IMR-90 (cell line): ENCODE measurements at regions of chr15 and their contacts with region 1.

Region 1: DNA sequence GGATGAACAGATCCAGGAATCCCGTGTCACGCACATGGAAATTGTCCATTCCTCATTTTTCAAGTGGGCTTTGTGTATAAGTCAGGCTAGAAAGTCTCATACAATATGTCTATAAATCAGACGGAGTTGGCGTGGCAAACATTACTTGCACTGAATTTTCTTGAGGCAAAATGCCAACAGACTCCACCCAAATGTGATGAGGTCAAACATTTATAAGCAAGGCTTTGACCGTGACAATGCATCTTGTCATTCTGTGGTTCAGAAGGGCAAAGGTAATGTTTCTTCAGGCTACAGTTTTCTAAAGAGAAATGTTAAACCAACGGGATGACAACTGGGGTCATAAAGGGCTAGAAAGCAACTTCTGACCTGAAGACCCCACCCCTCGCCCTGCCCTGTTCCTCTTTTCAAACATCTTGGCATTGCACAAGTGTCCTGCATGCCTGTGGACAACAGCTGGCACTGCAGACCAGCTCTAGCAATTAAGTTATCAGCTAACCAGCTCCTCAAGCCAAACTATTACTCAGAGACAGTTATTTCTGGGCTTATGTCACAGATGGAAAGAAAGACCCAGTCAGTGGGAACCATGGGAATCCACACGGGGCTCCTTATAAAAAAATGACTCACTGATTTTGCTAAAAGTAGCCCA is 36.5 kb upstream of the SPTBN5 start:
- DNase-seq: peak; percentile 97
- ATAC-seq: peak; percentile 72
- H3K4me3 ChIP-seq: no peak overlapping the region
- H3K27ac ChIP-seq: peak overlapping the region; percentile 10
- H3K4me1 ChIP-seq: peaks cover 36% of the 10 kb centered on the region
- H3K27me3 ChIP-seq: no peaks in the 10 kb centered on the region
- CTCF ChIP-seq: peak; percentile 59
- POLR2A ChIP-seq: no peak
- RAD21 ChIP-seq: peak; percentile 64

Region 2: GRCh38 chr15:41957021-41957897 is 26.9 kb after region 1 on chr15:
- CTCF ChIA-PET with region 1: no interaction called
- POLR2A ChIA-PET with region 1: interaction called, 19 read pairs
- dilution Hi-C with region 1: no loop called
- in situ Hi-C with region 1: no loop called
- intact Hi-C with region 1: no loop called
- DNase-seq: peak; percentile 38
- ATAC-seq: peak; percentile 49
- H3K4me3 ChIP-seq: no peak overlapping the region
- H3K27ac ChIP-seq: no peak overlapping the region
- H3K4me1 ChIP-seq: peaks cover 14% of the 10 kb centered on the region
- H3K27me3 ChIP-seq: no peaks in the 10 kb centered on the region
- CTCF ChIP-seq: no peak
- POLR2A ChIP-seq: no peak
- RAD21 ChIP-seq: no peak

Region 3: GRCh38 chr15:41972253-41973242 is 42.2 kb after region 1 on chr15 and contains the start of gene EHD4:
- CTCF ChIA-PET with region 1: no interaction called
- POLR2A ChIA-PET with region 1: no interaction called
- dilution Hi-C with region 1: no loop called
- in situ Hi-C with region 1: no loop called
- intact Hi-C with region 1: loop called (anchors 1 kb)
- DNase-seq: peak; percentile 99
- ATAC-seq: peak; percentile 96
- H3K4me3 ChIP-seq: peak within 1 kb of the TSS; percentile 96
- H3K27ac ChIP-seq: peak within 1 kb of the TSS; percentile 65
- H3K4me1 ChIP-seq: peaks cover 6% of the 10 kb centered on the region
- H3K27me3 ChIP-seq: peaks cover 2% of the 10 kb centered on the region; the same call in 1 of the 2 replicates
- CTCF ChIP-seq: peak; percentile 39; the same call in 1 of the 2 replicates
- POLR2A ChIP-seq: peak; percentile 89
- RAD21 ChIP-seq: no peak; the same call in 1 of the 2 replicates
- total RNA-seq, gene EHD4: 26.4 and 29.0 TPM in 2 replicates

Region 4: GRCh38 chr15:42056934-42057779 is 126.8 kb after region 1 on chr15:
- CTCF ChIA-PET with region 1: no interaction called
- POLR2A ChIA-PET with region 1: no interaction called
- dilution Hi-C with region 1: no loop called
- in situ Hi-C with region 1: no loop called
- intact Hi-C with region 1: loop called (anchors 5 kb)
- DNase-seq: peak; percentile 62
- ATAC-seq: peak; percentile 94
- H3K4me3 ChIP-seq: peak overlapping the region; percentile 3; the same call in 1 of the 2 replicates
- H3K27ac ChIP-seq: no peak overlapping the region
- H3K4me1 ChIP-seq: no peaks in the 10 kb centered on the region
- H3K27me3 ChIP-seq: peaks cover 42% of the 10 kb centered on the region
- CTCF ChIP-seq: peak; percentile 52
- POLR2A ChIP-seq: no peak
- RAD21 ChIP-seq: peak; percentile 48

Region 5: GRCh38 chr15:42286445-42287029 is 356.2 kb after region 1 on chr15:
- CTCF ChIA-PET with region 1: no interaction called
- POLR2A ChIA-PET with region 1: no interaction called
- dilution Hi-C with region 1: no loop called
- in situ Hi-C with region 1: no loop called
- intact Hi-C with region 1: no loop called
- DNase-seq: peak; percentile 60
- ATAC-seq: peak; percentile 79
- H3K4me3 ChIP-seq: no peak overlapping the region
- H3K27ac ChIP-seq: no peak overlapping the region
- H3K4me1 ChIP-seq: peaks cover 3% of the 10 kb centered on the region; the same call in 1 of the 2 replicates
- H3K27me3 ChIP-seq: no peaks in the 10 kb centered on the region
- CTCF ChIP-seq: no peak
- POLR2A ChIP-seq: no peak
- RAD21 ChIP-seq: no peak